GM12878 (cell line): ENCODE measurements at regions of chr11 and their contacts with region 1.

Region 1: GRCh38 chr11:35474688-35475087 is 50.7 kb downstream of the PAMR1 start:
- DNase-seq: no peak
- ATAC-seq: no peak
- H3K4me3 ChIP-seq: no peak overlapping the region
- H3K27ac ChIP-seq: no peak overlapping the region
- H3K4me1 ChIP-seq: no peaks in the 10 kb centered on the region
- H3K27me3 ChIP-seq: peaks cover 4 to 6% of the 10 kb centered on the region in 2 experiments; a peak in 3 of 4 replicates
- CTCF ChIP-seq: no peak
- EP300 ChIP-seq: no peak
- POLR2A ChIP-seq: no peak
- RAD21 ChIP-seq: no peak

Region 2: DNA sequence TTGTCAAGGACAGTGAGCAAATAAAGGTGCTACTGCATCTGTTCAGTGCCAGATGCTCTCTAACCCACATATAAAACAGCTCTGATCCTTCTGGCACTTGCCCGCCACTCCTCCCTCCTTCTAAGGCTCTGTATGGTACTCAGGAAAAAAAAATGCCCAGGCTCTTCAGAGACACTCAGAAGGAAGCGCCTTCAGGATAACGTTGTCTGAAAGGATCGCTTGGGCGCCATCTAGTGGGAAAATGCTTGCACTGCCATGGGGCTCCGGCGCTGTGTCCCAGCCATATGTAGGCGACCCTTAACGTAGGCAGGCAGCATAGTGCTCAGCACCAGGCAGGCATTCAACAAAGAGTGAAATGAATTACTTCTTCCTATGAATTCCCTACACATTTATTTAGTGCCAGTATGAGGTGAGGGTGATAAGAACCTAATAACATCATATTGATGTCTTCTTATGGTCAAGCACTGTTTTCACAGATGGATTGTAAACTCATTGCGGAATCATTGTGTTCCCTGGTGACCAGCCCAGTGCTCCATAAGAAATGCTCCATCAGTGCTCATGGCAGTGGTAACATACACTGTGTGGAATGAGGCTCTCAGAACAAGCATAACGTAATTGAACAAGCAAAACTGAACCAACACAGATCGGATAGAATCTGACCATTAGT is 11.1 kb after region 1 on chr11:
- CTCF ChIA-PET with region 1: interaction called, 11 read pairs
- POLR2A ChIA-PET with region 1: no interaction called
- RAD21 ChIA-PET with region 1: no interaction called
- SMC1A ChIA-PET with region 1: interaction called, 3 read pairs
- in situ Hi-C with region 1: no loop called
- intact Hi-C with region 1: no loop called
- DNase-seq: peak; percentile 7
- ATAC-seq: peak; percentile 100
- H3K4me3 ChIP-seq: no peak overlapping the region
- H3K27ac ChIP-seq: no peak overlapping the region
- H3K4me1 ChIP-seq: no peaks in the 10 kb centered on the region
- H3K27me3 ChIP-seq: no peaks in the 10 kb centered on the region; a peak in 1 of 4 replicates
- CTCF ChIP-seq: peak; percentile 82 to 92 (median 92)
- EP300 ChIP-seq: no peak
- POLR2A ChIP-seq: no peak
- RAD21 ChIP-seq: peak; percentile 66